Mammary epithelial cell (primary cell): ENCODE measurements at regions of chr20 and their contacts with region 1.

Region 1: GRCh38 chr20:59222253-59223181 is 58.9 kb downstream of the ZNF831 start:
- DNase-seq: peak; percentile 39
- H3K4me3 ChIP-seq: peak overlapping the region; percentile 42 to 74 (median 45)
- H3K27ac ChIP-seq: no peak overlapping the region
- H3K4me1 ChIP-seq: peaks cover 6% of the 10 kb centered on the region
- H3K27me3 ChIP-seq: peaks cover 9% of the 10 kb centered on the region
- CTCF ChIP-seq: peak; percentile 72 to 92

Region 2: GRCh38 chr20:59055295-59055694 is 167.2 kb before region 1 on chr20:
- CTCF ChIA-PET with region 1: no interaction called
- dilution Hi-C with region 1: no loop called
- in situ Hi-C with region 1: no loop called
- intact Hi-C with region 1: loop called (anchors 1 kb)
- DNase-seq: no peak
- H3K4me3 ChIP-seq: no peak overlapping the region
- H3K27ac ChIP-seq: no peak overlapping the region
- H3K4me1 ChIP-seq: no peaks in the 10 kb centered on the region
- H3K27me3 ChIP-seq: no peaks in the 10 kb centered on the region
- CTCF ChIP-seq: peak; percentile 43 to 58

Region 3: GRCh38 chr20:59112978-59113377 is 109.5 kb before region 1 on chr20:
- CTCF ChIA-PET with region 1: no interaction called
- dilution Hi-C with region 1: no loop called
- in situ Hi-C with region 1: no loop called
- intact Hi-C with region 1: no loop called
- DNase-seq: no peak
- H3K4me3 ChIP-seq: no peak overlapping the region
- H3K27ac ChIP-seq: no peak overlapping the region
- H3K4me1 ChIP-seq: no peaks in the 10 kb centered on the region
- H3K27me3 ChIP-seq: peaks cover 3% of the 10 kb centered on the region
- CTCF ChIP-seq: no peak

Region 4: DNA sequence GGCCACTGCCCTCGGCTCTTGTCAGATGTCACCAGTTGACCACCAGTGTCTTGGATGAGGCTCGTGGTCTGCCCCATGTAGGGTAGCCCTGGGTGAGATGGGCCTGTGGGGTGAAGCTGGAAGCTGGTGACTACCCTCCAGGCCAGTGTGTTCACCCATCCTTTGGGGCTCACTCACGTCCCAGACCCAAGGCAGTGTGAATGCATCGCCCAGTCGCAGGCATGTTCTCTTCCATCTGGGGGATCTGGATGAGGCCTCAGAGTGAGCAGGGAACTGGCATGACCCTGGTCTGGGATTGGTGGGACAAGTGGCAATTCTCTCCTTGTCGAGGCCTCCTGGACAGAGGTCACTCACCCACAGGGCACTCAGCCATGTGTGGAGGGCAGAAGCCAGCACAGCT is 261.7 kb after region 1 on chr20:
- CTCF ChIA-PET with region 1: interaction called, 10 read pairs
- dilution Hi-C with region 1: no loop called
- in situ Hi-C with region 1: no loop called
- intact Hi-C with region 1: no loop called
- DNase-seq: no peak
- H3K4me3 ChIP-seq: no peak overlapping the region
- H3K27ac ChIP-seq: no peak overlapping the region
- H3K4me1 ChIP-seq: no peaks in the 10 kb centered on the region
- H3K27me3 ChIP-seq: no peaks in the 10 kb centered on the region
- CTCF ChIP-seq: no peak